Right ventricle myocardium superior (tissue), 1 donor: ENCODE measurements at regions of chr20 and their contacts with region 1.

Region 1: DNA sequence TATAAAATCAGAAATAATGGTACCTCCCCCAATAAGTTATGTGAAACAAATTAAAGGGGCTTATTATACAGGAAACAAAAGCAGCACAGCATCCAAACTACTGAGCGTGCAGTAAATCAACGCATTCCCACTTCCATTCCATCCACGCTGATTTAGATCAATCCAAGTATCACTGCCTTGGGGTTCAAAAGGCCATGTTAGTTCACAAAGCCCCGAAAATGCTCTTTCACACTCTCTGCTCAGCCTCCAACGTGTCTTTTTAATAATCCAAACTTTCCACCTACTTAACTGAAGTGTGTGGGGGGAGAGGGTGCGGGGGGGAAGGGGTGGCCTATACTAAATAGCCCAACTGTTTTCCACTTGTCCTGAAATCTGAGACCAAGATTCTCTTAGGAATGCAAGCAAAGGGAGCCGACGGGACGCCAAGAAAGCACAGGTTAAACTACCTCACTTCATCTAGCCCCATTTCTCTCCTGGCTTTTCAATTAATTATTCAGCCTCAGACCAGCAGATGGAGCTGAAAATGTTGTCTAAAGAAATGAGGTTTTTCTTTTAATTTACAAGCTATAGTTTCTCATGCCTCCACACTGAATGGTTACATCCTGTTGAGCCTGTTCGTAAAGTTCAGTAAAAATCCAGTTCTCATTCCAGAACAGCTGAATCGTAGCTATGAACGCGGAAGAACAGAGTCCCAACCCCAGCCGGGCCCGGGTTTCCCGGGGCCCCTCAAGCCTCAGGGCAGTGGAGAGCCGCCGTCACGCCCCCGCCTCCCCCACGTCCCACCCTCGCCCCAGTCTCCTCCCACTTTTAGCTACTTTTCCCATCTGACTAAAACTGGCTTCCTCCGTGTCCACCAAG is 1.0 kb upstream of the NXT1 start:
- DNase-seq: peak; percentile 85
- ATAC-seq: peak; percentile 77

Region 2: GRCh38 chr20:23061734-23062561 is 287.6 kb before region 1 on chr20:
- intact Hi-C with region 1: loop called (anchors 10 kb)
- DNase-seq: peak; percentile 67
- ATAC-seq: peak; percentile 89

Region 3: GRCh38 chr20:23305098-23305497 is 44.5 kb before region 1 on chr20:
- intact Hi-C with region 1: no loop called
- DNase-seq: no peak
- ATAC-seq: peak; percentile 88